Activated CD4-positive, alpha-beta T cell treated with anti-CD3 and anti-CD28 coated beads, Interleukin-2, amount 10 ng/mL, durations not matched to agents 24 days and 14 days (primary cell): ENCODE measurements at regions of chr7 and their contacts with region 1.

Region 1: DNA sequence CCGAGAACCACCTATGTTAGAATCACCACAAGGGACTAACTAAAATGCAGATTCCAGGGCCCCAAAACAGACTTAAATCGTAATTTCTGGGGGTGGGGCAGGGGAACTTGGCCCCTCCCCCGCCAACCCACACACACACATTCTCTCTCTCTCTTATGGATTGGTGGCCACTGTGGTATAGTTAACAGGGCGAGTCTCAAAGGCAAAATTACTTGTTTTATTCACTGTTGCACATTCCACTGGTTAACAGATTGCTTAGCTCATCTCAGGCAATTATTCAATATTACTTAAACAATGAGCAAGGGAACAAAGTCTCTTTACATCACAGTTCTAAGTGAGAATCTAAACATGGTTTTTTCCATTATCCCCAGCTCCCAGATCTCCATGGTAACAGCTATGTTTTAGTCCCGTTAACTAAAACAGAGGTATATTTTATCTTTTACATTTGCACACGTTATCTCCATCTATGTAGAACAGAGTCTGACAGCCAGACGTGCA is 38.5 kb downstream of the IGF2BP3 start:
- DNase-seq: no peak
- H3K4me3 Mint-ChIP-seq: no peak overlapping the region
- H3K27ac Mint-ChIP-seq: no peak overlapping the region
- H3K4me1 Mint-ChIP-seq: peaks cover 9% of the 10 kb centered on the region
- H3K27me3 Mint-ChIP-seq: peaks cover 30% of the 10 kb centered on the region

Region 2: DNA sequence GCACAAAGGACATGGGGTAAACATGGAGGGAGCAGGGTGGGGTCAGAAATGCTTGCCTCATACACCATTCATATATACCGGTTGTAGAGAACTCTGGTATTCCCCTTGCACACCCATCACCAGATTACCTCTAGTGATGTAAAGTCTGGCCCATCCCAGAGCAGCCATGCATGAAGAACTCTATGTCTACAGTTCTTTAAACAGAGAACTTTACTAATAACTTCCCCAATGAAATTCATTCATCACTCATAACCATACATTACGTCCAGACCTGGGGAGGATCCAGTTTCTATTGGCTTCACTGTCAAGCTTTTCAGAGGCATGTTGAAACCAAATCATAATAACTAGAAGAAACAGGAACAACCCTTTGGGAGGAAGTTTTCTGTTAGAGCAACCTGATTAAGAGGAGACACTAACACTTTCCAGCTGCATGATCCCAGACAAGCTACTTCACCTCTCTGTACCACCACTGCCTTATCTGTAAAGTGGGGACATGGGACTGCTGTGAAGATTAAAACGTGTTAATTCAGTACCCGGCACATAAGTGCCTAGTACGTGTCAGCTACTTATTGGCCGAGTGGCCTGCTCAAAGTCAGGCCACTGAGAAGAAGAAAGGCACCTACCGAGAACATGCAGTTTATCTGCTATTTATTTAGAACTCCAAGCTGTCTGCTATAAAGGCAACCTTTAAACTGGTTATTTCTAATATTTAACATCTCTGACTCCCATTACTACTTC is 21.1 kb before region 1 on chr7:
- intact Hi-C with region 1: no loop called
- DNase-seq: no peak
- H3K4me3 Mint-ChIP-seq: no peak overlapping the region
- H3K27ac Mint-ChIP-seq: no peak overlapping the region
- H3K4me1 Mint-ChIP-seq: peaks cover 5% of the 10 kb centered on the region
- H3K27me3 Mint-ChIP-seq: peaks cover 4% of the 10 kb centered on the region

Region 3: DNA sequence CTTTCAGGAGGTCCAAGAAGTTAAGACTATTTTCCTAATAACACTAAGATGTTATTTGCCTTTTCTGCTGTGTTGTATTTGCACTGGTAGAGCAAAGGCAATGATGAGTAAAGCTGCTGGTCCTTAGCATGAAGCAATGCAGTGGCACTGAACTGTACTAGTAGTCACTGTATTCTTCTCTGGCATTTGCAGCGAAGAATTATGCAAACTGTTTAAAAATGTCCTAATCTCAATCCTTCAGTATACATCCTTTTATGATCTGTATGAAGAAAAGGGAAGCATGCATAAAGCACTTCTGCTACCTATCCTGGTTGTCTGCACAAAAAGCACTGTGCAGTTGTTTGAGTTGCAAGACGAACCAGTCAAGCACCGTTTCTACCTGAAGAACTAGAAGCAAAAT is 18.2 kb after region 1 on chr7:
- intact Hi-C with region 1: no loop called
- DNase-seq: no peak
- H3K4me3 Mint-ChIP-seq: no peak overlapping the region
- H3K27ac Mint-ChIP-seq: no peak overlapping the region
- H3K4me1 Mint-ChIP-seq: peaks cover 5% of the 10 kb centered on the region
- H3K27me3 Mint-ChIP-seq: peaks cover 30% of the 10 kb centered on the region

Region 4: GRCh38 chr7:23462846-23463245 is 31.1 kb after region 1 on chr7:
- intact Hi-C with region 1: loop called (anchors 2 kb)
- DNase-seq: peak; percentile 67
- H3K4me3 Mint-ChIP-seq: no peak overlapping the region
- H3K27ac Mint-ChIP-seq: no peak overlapping the region
- H3K4me1 Mint-ChIP-seq: peaks cover 15% of the 10 kb centered on the region
- H3K27me3 Mint-ChIP-seq: peaks cover 67% of the 10 kb centered on the region

Region 5: DNA sequence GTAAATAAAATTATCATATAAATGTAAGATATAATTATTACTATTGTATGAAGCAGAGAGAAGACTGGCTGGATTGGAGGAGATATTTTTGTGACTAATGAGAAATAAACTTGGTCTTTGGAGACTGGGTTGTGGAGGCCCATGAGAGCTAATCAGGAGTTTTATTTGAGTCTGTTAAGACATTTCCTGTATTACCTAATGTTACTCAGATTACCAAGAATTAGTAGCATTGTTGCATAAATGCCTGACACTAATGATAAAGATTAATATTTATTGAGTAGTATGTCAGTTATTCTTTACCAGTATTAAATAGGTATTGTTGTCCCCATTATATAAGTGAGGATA is 172.5 kb after region 1 on chr7:
- intact Hi-C with region 1: no loop called
- DNase-seq: no peak
- H3K4me3 Mint-ChIP-seq: no peak overlapping the region
- H3K27ac Mint-ChIP-seq: no peak overlapping the region
- H3K4me1 Mint-ChIP-seq: peaks cover 12% of the 10 kb centered on the region
- H3K27me3 Mint-ChIP-seq: no peaks in the 10 kb centered on the region